ENCODE measurements at regions of chr9 and their contacts with region 1.

Region 1: DNA sequence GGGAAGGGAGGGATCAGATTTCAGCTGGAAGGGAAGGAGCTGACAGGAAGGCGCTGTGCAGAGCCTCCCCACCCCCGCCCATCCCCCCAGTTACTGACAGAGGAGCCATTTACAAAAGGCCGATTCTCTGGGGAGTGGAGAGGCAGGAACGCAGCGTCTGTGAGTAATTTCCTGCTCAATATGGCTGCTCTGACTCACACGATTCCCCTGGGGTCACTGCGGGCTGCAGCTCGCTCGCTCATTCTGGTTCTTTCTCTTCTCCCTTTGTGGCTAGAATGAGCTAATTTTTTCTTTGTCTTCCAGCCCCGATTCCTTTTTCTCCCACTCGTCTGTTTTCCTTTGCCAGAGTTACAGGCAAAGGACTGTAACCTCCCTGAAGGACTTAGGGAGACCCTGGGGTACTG is 28.8 kb downstream of the PTPA start:
- DNase-seq: peak; percentile 98
- H3K4me3 ChIP-seq: peak overlapping the region in 1 of 3 experiments; percentile 31
- H3K27ac ChIP-seq: peak overlapping the region; percentile 99
- H3K4me1 ChIP-seq: peaks cover 55% of the 10 kb centered on the region
- H3K27me3 ChIP-seq: no peaks in the 10 kb centered on the region
- CTCF ChIP-seq: no peak
- POLR2A ChIP-seq: peak; percentile 85

Region 2: GRCh38 chr9:129202613-129203555 is 62.9 kb after region 1 on chr9:
- CTCF ChIA-PET with region 1: interaction called, 4 read pairs
- POLR2A ChIA-PET with region 1: no interaction called
- dilution Hi-C with region 1: no loop called
- intact Hi-C with region 1: loop called (anchors 2 kb)
- DNase-seq: peak; percentile 72
- H3K4me3 ChIP-seq: peak overlapping the region; percentile 59 to 81 (median 62)
- H3K27ac ChIP-seq: peak overlapping the region; percentile 71
- H3K4me1 ChIP-seq: peaks cover 6% of the 10 kb centered on the region
- H3K27me3 ChIP-seq: no peaks in the 10 kb centered on the region
- CTCF ChIP-seq: no peak
- POLR2A ChIP-seq: no peak

Region 3: DNA sequence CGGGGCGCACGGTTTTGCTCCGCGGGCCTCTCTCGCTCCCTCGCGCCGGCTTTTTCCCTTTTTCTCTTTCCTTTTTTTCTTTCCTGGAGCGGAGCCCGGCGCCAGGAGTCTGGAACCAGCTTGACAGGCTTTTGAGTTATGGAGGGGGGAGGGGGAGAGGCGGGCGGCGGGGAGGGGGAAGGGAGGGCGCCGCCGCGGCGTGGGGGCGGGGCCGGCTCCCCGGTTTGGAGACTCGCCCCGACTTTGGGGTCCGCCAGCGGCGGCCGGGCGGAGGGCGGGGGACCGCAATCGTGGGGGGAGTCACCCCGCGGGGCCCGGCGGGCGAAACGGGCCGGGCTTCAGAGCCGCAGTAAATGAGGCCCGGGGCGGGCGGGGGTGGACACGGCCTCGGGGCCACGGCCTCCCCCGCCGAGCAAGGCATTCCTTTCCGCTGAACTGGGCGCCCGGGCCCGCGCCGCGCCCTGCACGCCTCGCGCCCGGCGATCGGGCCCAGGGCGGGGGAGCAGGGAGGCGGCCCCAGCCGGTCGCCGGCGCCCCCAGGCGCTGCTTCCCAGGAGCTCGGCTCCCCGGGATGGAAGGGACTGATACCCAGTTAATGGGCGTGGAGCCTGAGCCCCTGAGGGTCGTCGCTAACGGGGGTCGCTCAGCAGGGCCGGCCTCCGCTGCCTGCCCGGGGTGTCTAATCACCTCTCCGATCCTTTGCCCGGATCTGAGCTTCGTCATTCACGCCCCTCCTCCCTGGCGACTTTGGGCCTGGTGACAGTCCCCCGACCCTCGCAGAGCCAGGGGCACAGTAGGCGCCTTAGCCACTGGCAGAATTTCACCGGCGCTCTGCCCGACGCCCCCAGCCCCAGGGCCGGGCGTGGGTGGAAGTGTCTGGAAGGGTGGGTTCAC is 342.8 kb after region 1 on chr9:
- CTCF ChIA-PET with region 1: interaction called, 16 read pairs
- POLR2A ChIA-PET with region 1: no interaction called
- dilution Hi-C with region 1: no loop called
- intact Hi-C with region 1: no loop called
- DNase-seq: peak; percentile 69
- H3K4me3 ChIP-seq: peak overlapping the region in 1 of 3 experiments; percentile 40
- H3K27ac ChIP-seq: peak overlapping the region; percentile 93
- H3K4me1 ChIP-seq: peaks cover 31% of the 10 kb centered on the region
- H3K27me3 ChIP-seq: no peaks in the 10 kb centered on the region
- CTCF ChIP-seq: no peak
- POLR2A ChIP-seq: no peak

Region 4: DNA sequence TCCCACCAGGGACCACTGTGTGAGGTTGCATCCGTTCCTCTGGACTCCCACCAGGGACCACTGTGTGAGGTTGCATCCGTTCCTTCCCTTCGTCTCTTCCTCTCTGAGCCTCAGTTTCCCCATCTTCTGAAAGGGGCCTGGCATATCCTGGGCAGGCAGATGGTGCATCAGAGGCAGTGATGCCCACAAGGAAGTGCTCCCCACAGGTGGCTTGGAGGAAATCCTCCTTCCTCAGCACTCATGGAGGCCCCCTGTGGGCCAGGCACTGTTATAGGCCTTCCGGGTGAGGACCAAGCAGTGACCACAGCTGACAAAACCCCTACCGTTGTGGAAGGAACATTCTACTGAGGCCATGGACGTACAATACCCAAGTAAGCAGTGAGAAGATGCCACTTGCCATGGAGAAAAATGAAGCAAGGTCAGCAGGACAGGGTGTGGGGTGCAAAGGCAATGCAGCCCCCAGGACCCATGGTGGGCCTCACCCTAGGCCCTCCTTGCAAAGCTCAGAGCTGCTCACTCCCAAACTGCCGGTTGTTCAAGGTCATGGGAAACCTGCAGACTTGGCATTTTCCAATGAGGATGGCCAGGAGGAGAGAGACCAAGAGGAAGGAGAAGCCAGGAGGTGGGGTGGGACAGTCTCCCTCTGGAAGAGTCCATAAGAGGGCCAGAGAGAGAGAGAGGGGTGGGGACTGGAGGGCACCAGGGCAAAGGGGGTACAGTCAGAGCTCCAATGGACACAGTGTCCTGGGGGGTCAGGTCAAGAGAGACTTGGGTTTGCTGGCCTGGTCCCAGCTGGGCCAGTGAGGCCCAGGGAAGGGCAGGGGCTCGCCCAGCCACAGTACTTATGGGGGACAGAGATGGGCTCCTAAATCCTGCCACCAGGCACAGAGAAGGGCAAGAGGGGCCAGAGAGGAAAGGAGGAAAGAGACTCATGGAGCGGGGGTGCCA is 429.8 kb after region 1 on chr9:
- CTCF ChIA-PET with region 1: no interaction called
- POLR2A ChIA-PET with region 1: no interaction called
- dilution Hi-C with region 1: no loop called
- intact Hi-C with region 1: loop called (anchors 2 kb)
- DNase-seq: peak; percentile 30
- H3K4me3 ChIP-seq: no peak overlapping the region
- H3K27ac ChIP-seq: no peak overlapping the region
- H3K4me1 ChIP-seq: peaks cover 2% of the 10 kb centered on the region
- H3K27me3 ChIP-seq: no peaks in the 10 kb centered on the region
- CTCF ChIP-seq: peak; percentile 22 to 48
- POLR2A ChIP-seq: no peak

Region 5: GRCh38 chr9:129617167-129617566 is 477.2 kb after region 1 on chr9:
- CTCF ChIA-PET with region 1: interaction called, 232 read pairs
- POLR2A ChIA-PET with region 1: no interaction called
- dilution Hi-C with region 1: no loop called
- intact Hi-C with region 1: no loop called
- DNase-seq: peak; percentile 31
- H3K4me3 ChIP-seq: no peak overlapping the region
- H3K27ac ChIP-seq: no peak overlapping the region
- H3K4me1 ChIP-seq: no peaks in the 10 kb centered on the region
- H3K27me3 ChIP-seq: peaks cover 0 to 8% of the 10 kb centered on the region in 2 experiments
- CTCF ChIP-seq: peak; percentile 41 to 46
- POLR2A ChIP-seq: no peak

Region 6: DNA sequence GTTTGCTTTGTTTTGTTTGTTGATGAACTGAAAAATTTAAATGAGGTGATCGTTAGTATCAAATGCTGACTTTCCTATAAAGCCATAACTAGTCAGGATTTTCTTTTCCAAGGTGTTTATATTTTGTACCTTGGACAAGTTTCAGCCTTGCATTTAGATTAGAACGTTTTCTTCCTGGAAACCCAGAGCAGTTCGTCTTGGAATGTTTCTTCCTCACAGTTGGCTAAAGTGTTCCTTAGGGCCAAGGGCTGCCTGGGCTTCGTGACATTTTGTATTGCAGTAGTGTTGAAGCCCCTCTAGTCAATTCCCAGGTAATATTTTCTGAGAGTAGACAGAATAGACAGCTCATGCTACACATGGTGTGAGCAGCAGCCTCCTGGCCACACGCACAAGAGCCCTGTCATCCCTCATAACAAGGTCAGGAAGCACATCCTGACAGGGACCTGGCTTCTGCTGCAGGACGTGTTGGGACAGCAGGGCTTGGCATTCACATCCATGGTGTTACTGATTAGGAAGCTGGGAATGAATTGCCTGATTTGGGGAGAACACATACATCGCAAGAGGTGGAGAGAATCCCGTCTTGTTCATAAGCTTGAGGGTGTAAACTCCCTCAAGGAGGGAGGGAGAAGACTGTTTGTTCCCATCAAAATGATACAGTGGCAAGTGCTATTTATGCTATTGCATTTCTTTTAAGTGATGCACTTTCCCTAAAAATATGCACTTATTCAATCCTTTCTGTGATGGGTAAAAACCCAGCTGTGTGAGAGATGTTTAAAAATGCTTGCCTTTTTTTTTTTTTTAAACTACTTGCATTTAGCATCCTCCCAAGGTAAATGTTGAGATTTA is 1471.1 kb after region 1 on chr9:
- CTCF ChIA-PET with region 1: no interaction called
- POLR2A ChIA-PET with region 1: no interaction called
- dilution Hi-C with region 1: no loop called
- intact Hi-C with region 1: no loop called
- DNase-seq: no peak
- H3K4me3 ChIP-seq: no peak overlapping the region
- H3K27ac ChIP-seq: no peak overlapping the region
- H3K4me1 ChIP-seq: no peaks in the 10 kb centered on the region
- H3K27me3 ChIP-seq: no peaks in the 10 kb centered on the region
- CTCF ChIP-seq: no peak
- POLR2A ChIP-seq: no peak

Measured in endothelial cell of umbilical vein (primary cell).